Heart left ventricle (tissue), 16 donors: ENCODE measurements at regions of chr9 and their contacts with region 1.

Region 1: DNA sequence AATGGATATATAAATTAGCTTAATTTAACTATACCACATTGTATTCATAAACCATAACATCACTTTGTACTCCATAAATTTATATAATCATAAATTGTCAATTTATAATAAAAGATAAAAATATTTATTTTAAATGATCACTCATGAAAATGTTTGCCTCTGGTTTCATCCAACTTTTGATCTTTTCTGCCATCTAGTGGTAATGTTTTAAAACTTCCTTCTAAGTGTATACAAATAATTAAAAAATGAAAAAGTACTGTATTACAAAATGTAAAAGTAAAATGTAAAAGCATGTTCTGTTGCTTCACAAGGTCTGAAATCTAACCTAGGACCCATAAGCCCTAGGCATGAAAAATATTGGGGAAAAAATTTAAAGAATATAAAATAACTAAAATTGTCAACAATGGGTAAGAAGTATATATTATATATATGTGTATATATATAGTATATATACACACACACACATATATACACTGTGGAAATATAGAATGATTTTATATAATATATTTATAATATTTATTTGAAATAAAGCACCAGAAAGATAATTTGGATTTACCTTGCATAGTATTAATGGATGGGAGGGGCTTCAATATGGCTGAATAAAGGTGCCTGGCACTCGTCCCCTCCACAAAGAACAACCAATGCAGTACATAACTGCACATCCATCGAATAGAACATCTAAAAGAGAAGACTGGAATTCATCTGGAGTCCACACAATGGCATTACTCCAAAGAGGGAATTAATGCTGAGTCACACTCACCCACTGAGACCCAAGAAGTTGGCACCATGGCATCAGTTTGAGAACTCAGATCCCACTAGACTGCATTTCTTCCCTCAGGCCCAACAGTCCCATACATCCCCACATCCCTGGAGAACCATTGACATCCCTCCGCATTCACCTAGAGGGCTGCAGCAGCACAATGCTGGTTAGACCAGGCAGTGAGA is 32.5 kb downstream of the ANXA1 start:
- DNase-seq: no peak
- ATAC-seq: no peak
- H3K4me3 ChIP-seq: no peak overlapping the region
- H3K27ac ChIP-seq: no peak overlapping the region
- H3K4me1 ChIP-seq: peaks cover 0 to 26% (median 0%) of the 10 kb centered on the region in 12 donors
- H3K27me3 ChIP-seq: no peaks in the 10 kb centered on the region
- CTCF ChIP-seq: peak; percentile 45 to 77 (median 64)
- POLR2A ChIP-seq: no peak

Region 2: DNA sequence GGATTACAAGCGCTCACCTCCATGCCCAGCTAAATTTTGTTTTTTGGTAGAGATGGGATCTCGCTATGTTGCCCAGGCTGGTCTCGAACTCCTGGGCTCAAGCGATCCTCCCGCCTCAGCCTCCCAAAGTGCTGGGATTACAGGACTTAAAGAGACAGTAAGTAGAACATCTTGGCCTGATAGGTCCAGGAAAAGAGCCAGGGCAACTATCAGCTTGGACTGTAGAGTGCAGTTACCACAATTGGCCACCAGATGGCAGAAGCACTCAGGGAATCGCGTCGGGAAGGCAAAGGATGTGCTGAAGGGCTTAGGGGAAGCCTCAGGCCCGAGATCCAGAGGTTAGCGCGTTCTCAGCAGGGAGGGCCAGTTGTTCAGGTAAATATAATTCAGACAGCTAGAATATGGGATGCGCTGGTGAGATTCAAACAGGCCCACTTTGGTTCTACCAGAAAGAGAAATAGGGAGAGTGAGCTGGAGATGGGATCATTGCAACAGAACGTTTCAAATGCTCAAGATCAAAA is 1145.2 kb before region 1 on chr9:
- intact Hi-C with region 1: loop called in 1 of 10 experiments (anchors 10 kb)
- DNase-seq: peak; percentile 64 to 72 (median 71)
- ATAC-seq: peak; percentile 62 to 90 (median 86)
- H3K4me3 ChIP-seq: no peak overlapping the region
- H3K27ac ChIP-seq: no peak overlapping the region
- H3K4me1 ChIP-seq: peaks cover 0 to 9% (median 0%) of the 10 kb centered on the region in 12 donors
- H3K27me3 ChIP-seq: no peaks in the 10 kb centered on the region
- CTCF ChIP-seq: peak; percentile 87 to 99 (median 97)
- POLR2A ChIP-seq: no peak

Region 3: DNA sequence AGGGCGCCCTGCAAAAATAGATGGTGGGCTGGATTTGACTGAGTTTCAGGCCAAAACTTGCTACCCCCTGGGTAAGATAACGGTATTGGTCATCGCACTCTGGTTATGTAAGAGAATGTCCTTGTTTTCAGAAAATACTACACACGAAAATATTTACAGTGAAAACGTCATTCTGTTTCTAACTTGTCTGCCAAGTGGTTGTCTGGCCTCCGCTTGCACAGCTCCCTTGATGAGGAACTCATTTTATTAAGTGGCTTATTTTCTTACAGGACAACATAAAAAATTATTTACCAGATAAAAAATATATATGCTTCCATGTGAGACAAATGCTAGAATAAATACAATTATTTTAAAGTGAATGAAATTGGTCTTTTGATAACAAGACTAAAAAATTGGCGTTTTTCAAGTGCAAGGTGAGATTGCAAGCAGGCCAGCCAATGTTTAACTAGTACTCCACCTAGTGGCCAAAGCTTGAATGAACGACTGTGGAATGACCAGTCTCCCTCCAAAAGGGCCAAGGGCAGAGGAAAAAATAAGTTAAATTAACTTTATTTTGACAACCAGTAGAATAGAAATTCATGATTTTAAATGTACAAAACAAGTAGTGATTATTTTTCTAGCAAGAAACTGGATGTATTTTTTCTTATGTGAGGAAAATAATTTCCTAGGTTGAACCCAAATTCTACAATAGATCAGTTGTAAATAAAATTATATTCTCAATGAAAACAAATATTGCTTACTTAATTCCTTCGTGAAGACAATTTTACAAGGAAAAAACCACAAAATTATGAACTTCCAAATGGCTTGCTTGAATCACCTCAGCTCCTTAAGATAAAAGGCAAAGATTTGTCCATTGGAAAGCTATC is 912.3 kb before region 1 on chr9:
- intact Hi-C with region 1: loop called in 1 of 10 experiments (anchors 10 kb)
- DNase-seq: peak in 2 of 5 donors; percentile 30 to 36
- ATAC-seq: peak in 1 of 4 donors; percentile 56
- H3K4me3 ChIP-seq: no peak overlapping the region
- H3K27ac ChIP-seq: no peak overlapping the region
- H3K4me1 ChIP-seq: no peaks in the 10 kb centered on the region
- H3K27me3 ChIP-seq: no peaks in the 10 kb centered on the region
- CTCF ChIP-seq: peak; percentile 77 to 92 (median 87)
- POLR2A ChIP-seq: no peak

Region 4: GRCh38 chr9:72856972-72857623 is 327.1 kb before region 1 on chr9:
- intact Hi-C with region 1: loop called in 7 of 10 experiments (anchors 5 to 10 kb)
- DNase-seq: peak in 2 of 5 donors; percentile 18 to 23
- ATAC-seq: peak; percentile 55 to 83 (median 70)
- H3K4me3 ChIP-seq: no peak overlapping the region
- H3K27ac ChIP-seq: peak overlapping the region in 2 of 12 donors; percentile 32 to 46
- H3K4me1 ChIP-seq: peaks cover 0 to 30% (median 14%) of the 10 kb centered on the region in 12 donors
- H3K27me3 ChIP-seq: no peaks in the 10 kb centered on the region
- CTCF ChIP-seq: peak; percentile 44 to 81 (median 63)
- POLR2A ChIP-seq: no peak

Region 5: DNA sequence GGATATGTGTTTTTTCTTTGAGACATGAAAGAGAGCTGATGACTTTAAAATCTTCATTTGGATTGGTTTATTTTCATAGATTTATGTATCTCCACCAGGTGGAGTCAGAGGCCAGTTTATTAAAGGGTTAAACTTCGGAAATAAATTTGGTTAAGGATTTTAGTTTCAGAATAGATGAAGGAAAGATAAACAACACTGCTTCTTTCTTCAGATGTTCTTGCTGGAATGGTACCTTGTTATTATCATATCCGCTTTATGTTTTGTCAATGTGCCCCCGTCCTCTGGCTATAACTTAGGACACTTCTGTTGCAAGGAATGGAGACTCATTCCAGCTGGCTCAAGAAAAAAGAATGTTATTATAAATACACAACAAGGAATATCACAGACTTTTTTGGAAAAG is 312.5 kb before region 1 on chr9:
- intact Hi-C with region 1: loop called in 2 of 10 experiments (anchors 5 to 10 kb)
- DNase-seq: no peak
- ATAC-seq: no peak
- H3K4me3 ChIP-seq: peak overlapping the region in 5 of 12 donors; percentile 4 to 34 (median 25)
- H3K27ac ChIP-seq: no peak overlapping the region
- H3K4me1 ChIP-seq: peaks cover 0 to 20% (median 3%) of the 10 kb centered on the region in 12 donors
- H3K27me3 ChIP-seq: no peaks in the 10 kb centered on the region
- CTCF ChIP-seq: peak; percentile 14 to 61 (median 48)
- POLR2A ChIP-seq: no peak

Region 6: DNA sequence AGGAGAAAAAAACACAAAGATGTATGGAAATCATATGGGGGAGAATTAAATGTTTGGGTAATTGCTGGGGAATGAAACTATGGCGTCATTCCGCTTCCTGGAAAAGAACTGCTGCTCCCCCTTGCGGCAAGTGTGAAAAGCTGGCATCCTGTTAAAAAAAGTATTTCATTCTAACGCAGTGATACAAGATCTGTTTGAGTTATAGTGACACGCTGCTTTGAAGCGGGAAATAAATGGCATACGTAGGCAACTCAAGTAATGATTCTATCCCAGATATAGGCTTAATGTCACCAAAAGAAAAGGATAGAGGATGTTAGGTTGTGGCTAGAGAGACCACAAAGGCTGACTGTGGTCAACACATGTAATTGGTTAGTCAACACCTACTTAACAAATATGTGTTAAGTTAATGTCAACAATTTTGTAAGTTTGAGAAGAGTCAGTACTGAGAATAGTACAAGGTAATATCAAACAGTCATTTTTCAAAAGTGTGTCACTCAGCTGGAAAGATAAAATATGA is 161.1 kb before region 1 on chr9:
- intact Hi-C with region 1: loop called in 1 of 10 experiments (anchors 10 kb)
- DNase-seq: peak in 3 of 5 donors; percentile 35 to 53 (median 41)
- ATAC-seq: peak in 2 of 4 donors; percentile 30 to 76
- H3K4me3 ChIP-seq: no peak overlapping the region
- H3K27ac ChIP-seq: no peak overlapping the region
- H3K4me1 ChIP-seq: peaks cover 0 to 6% (median 0%) of the 10 kb centered on the region in 12 donors
- H3K27me3 ChIP-seq: no peaks in the 10 kb centered on the region
- CTCF ChIP-seq: peak; percentile 65 to 89 (median 82)
- POLR2A ChIP-seq: no peak

Region 7: DNA sequence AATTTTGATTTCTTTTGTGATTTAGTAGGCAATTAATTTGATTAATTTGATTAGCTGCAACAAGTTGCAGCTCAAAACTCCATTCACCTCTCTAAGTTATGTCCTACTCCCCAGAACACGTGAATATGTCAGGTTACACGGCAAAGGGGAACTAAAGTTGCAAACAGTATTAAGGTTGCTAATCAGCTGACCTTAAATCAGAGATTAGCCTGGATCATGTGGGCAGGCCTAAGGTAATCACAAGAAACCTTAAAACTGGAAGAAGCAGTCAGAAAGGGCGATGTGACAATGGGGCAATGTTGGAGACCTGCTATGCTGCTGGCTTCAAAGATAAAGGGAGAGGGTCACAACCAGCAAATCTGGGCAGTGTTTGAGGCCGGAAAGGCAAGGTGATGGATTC is 79.8 kb before region 1 on chr9:
- intact Hi-C with region 1: loop called (anchors 1 to 5 kb)
- DNase-seq: no peak
- ATAC-seq: no peak
- H3K4me3 ChIP-seq: no peak overlapping the region
- H3K27ac ChIP-seq: no peak overlapping the region
- H3K4me1 ChIP-seq: no peaks in the 10 kb centered on the region
- H3K27me3 ChIP-seq: no peaks in the 10 kb centered on the region
- CTCF ChIP-seq: no peak
- POLR2A ChIP-seq: no peak